Gastrocnemius medialis (tissue), 4 donors: ENCODE measurements at regions of chr17 and their contacts with region 1.

Region 1: DNA sequence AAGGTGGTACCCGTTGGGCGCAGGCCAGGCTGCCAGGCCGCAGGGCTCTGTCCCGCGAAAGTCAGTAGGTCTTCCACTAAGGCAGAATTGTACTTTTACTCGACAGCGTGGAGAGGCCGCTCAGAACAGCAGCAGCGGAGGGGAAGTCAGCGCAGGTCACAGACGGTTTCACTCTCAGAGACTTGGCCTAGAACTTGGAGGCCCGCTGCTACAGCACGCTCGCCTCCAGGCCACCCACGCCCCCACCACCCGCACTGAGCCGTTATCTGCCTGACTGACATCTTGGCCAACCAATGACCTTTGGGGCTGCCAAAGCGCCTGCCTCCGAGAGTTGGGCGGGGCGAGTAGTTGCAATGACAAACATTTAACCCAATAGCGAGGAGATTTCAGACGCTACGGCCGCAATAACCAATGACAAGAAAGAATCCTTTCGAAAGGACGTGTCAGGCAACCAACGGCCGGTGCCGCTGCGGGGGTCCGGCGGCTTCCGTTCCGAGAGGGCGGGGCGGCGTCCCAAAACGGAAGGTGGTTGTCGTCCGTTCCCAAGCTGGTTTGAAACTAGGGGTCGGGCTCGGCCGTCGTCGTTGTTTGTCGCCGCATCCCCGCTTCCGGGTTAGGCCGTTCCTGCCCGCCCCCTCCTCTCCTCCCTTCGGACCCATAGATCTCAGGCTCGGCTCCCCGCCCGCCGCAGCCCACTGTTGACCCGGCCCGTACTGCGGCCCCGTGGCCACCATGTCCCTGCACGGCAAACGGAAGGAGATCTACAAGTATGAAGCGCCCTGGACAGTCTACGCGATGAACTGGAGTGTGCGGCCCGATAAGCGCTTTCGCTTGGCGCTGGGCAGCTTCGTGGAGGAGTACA is at the start of gene DCAF7:
- DNase-seq: peak; percentile 100
- ATAC-seq: peak; percentile 98 to 99
- H3K4me3 ChIP-seq: peak within 1 kb of the TSS; percentile 91 to 97 (median 93)
- H3K27ac ChIP-seq: peak within 1 kb of the TSS; percentile 87 to 96 (median 94)
- H3K4me1 ChIP-seq: peaks cover 37 to 43% of the 10 kb centered on the region in 2 donors
- H3K27me3 ChIP-seq: no peaks in the 10 kb centered on the region
- CTCF ChIP-seq: no peak
- POLR2A ChIP-seq: peak; percentile 66 to 68
- total RNA-seq, gene DCAF7: 16.5 to 34.1 (median 22.0) TPM

Region 2: DNA sequence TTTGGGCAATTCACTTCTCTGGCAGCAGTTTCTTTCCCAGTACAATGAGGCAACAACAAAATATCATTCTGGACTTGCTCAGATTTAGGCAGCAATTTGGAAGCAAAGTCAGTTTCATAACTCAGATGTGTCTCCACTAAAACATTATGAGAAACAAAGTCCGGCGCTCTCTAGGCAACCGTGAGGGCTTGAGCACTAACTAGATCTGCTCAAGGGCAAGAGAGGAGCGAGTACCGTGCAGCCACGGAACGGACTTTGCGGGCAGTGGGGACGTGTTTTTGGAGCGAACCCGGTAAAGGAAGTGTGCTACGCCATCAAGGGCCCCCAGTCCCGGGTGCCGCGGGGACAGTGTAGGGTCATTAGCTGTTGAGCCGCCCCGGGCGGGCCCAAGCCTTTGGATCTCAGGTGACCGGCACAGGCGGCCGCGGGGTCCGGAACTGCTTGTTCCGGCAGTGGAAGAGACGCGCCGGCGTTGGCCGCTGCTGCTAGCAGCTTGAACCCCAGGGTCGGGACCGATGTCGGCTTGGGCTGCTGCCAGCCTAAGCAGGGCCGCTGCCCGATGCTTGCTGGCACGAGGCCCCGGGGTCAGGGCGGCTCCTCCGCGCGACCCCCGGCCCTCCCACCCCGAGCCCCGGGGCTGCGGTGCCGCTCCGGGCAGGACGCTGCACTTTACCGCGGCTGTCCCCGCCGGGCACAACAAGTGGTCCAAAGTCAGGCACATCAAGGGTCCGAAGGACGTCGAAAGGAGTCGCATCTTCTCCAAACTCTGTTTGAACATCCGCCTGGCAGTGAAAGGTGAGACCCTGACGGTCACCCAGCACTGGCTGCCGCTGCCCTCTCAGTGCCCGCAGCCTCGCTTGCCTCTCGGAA is 50.6 kb after region 1 on chr17 and contains the start of gene TACO1:
- in situ Hi-C with region 1: loop called in 1 of 4 experiments (anchors 10 kb)
- intact Hi-C with region 1: loop called (anchors 1 kb)
- DNase-seq: peak; percentile 67 to 84
- ATAC-seq: peak; percentile 96 to 99
- H3K4me3 ChIP-seq: peak within 1 kb of the TSS; percentile 80 to 100 (median 91)
- H3K27ac ChIP-seq: peak within 1 kb of the TSS; percentile 85 to 98 (median 93)
- H3K4me1 ChIP-seq: peaks cover 11 to 17% of the 10 kb centered on the region in 2 donors
- H3K27me3 ChIP-seq: no peaks in the 10 kb centered on the region
- CTCF ChIP-seq: no peak
- POLR2A ChIP-seq: peak; percentile 50 to 69
- total RNA-seq, gene TACO1: 28.7 to 37.4 (median 30.6) TPM

Region 3: DNA sequence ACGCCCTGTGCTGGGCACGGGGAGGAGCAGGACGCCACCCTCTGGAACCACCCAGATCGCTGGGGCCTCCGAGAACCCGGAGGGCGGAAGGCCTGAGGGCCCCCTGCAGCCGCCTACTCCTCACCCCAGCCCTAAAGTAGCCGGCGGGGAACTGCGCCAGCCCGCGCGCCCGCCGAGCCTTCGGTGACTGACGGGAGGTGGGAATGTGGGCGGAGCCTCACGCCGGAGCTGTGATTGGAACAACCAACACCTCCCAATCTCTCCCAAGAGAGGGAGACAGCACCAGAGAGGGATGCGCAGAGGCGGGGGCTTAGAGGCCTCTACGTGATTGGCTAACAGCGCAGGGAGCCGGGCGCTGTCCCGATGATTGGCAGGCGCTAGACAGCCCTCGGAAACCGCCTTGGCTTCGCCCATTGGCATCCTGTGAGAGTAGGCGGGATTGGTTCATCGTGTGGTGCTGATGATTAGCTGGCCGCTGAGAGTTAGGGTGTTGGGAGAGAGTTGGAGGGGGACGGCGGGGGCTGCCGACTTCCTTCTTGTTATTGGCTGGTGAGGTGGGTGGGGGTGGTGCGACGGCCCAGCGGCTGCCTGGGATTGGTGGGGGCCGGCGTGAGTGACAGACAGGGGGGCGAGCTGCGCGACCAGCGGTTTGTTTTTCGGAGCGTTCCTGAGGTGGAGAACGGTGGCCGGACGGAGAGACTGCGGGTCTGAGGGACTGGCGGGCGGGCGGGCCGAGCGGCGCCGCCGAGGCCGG is 71.8 kb after region 1 on chr17 and contains the start of gene MAP3K3:
- in situ Hi-C with region 1: no loop called
- intact Hi-C with region 1: loop called (anchors 1 kb)
- DNase-seq: peak; percentile 99 to 100
- ATAC-seq: peak; percentile 92 to 93
- H3K4me3 ChIP-seq: peak within 1 kb of the TSS; percentile 67 to 84 (median 74)
- H3K27ac ChIP-seq: peak within 1 kb of the TSS; percentile 85 to 90 (median 87)
- H3K4me1 ChIP-seq: peaks cover 40 to 42% of the 10 kb centered on the region in 2 donors
- H3K27me3 ChIP-seq: no peaks in the 10 kb centered on the region
- CTCF ChIP-seq: peak in 2 of 5 experiments; percentile 23 to 26
- POLR2A ChIP-seq: peak; percentile 84 to 87
- total RNA-seq, gene MAP3K3: 21.8 to 58.7 (median 29.7) TPM

Region 4: GRCh38 chr17:63646488-63646806 is 96.3 kb after region 1 on chr17:
- in situ Hi-C with region 1: no loop called
- intact Hi-C with region 1: no loop called
- DNase-seq: no peak
- ATAC-seq: no peak
- H3K4me3 ChIP-seq: no peak overlapping the region
- H3K27ac ChIP-seq: no peak overlapping the region
- H3K4me1 ChIP-seq: peaks cover 24 to 28% of the 10 kb centered on the region in 2 donors
- H3K27me3 ChIP-seq: no peaks in the 10 kb centered on the region
- CTCF ChIP-seq: no peak
- POLR2A ChIP-seq: no peak

Region 5: DNA sequence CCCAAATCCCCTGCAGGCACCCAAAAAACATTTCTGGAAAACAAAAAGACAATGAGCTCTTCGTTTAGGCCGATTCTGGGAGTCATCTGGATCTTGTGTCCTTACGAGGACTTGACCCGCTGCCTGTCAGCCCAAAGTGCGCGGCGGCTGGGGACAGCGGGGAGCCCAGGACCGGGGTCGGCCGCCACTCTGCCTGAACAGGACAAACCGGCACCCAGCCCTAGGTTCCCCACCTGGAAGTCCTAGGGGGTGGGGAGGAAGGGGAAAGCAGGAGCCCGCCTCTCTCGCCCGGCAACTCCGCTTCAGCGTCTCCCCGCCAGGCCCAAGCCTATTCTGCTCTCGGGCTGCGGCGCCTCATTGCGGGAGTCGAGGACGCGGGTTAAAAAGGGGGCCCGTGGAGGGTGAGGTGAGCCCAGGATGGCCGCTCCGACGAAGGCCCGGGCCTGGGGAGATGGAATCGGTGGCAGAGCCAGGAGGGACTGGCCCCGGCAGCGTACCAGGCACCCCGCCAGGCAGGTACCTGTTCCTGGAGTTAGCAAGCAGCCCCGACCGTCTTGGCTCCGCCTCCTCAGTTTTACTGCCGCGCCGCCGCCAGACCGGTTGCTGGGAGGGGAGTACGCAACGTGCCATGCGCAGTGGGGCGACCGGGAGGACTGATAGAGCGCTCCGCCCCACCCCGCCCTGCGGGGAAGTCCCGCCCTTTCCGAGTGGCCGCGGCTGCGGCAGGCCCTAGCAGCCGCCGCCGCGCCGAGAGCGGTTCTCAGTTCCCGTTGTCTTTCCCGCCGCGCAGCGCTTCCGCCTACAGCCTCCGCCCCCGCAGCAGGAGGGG is 191.3 kb after region 1 on chr17 and contains the start of gene STRADA:
- in situ Hi-C with region 1: no loop called
- intact Hi-C with region 1: loop called (anchors 2 kb)
- DNase-seq: peak; percentile 98 to 99
- ATAC-seq: peak; percentile 94 to 98
- H3K4me3 ChIP-seq: peak within 1 kb of the TSS; percentile 77 to 85 (median 82)
- H3K27ac ChIP-seq: peak within 1 kb of the TSS; percentile 86 to 92 (median 90)
- H3K4me1 ChIP-seq: peaks cover 14% of the 10 kb centered on the region in 2 donors
- H3K27me3 ChIP-seq: no peaks in the 10 kb centered on the region
- CTCF ChIP-seq: no peak
- POLR2A ChIP-seq: peak; percentile 58 to 72
- total RNA-seq, gene STRADA: 7.5 to 15.0 (median 8.6) TPM